Activated CD4-positive, alpha-beta memory T cell treated with anti-CD3 and anti-CD28 coated beads, Interleukin-2, amount 10 ng/mL, durations not matched to agents 7 days and 5 days (primary cell): ENCODE measurements at regions of chr17 and their contacts with region 1.

Region 1: GRCh38 chr17:35088881-35089585 is 25.5 kb upstream of the RFFL start:
- DNase-seq: peak; percentile 93
- H3K4me3 Mint-ChIP-seq: peak overlapping the region; percentile 89
- H3K27ac Mint-ChIP-seq: peak overlapping the region; percentile 90
- H3K4me1 Mint-ChIP-seq: peaks cover 54% of the 10 kb centered on the region
- H3K27me3 Mint-ChIP-seq: no peaks in the 10 kb centered on the region

Region 2: GRCh38 chr17:34998205-34998604 is 90.8 kb before region 1 on chr17:
- CTCF ChIA-PET with region 1: interaction called, 41 read pairs
- POLR2A ChIA-PET with region 1: interaction called, 10 read pairs
- DNase-seq: peak; percentile 87
- H3K4me3 Mint-ChIP-seq: no peak overlapping the region
- H3K27ac Mint-ChIP-seq: peak overlapping the region; percentile 65
- H3K4me1 Mint-ChIP-seq: peaks cover 9% of the 10 kb centered on the region
- H3K27me3 Mint-ChIP-seq: no peaks in the 10 kb centered on the region

Region 3: GRCh38 chr17:35046740-35047283 is 42.2 kb before region 1 on chr17:
- CTCF ChIA-PET with region 1: interaction called, 10 read pairs
- POLR2A ChIA-PET with region 1: interaction called, 40 read pairs
- DNase-seq: peak; percentile 77
- H3K4me3 Mint-ChIP-seq: peak overlapping the region; percentile 70
- H3K27ac Mint-ChIP-seq: peak overlapping the region; percentile 93
- H3K4me1 Mint-ChIP-seq: peaks cover 55% of the 10 kb centered on the region
- H3K27me3 Mint-ChIP-seq: no peaks in the 10 kb centered on the region

Region 4: GRCh38 chr17:35073991-35074627 is 14.9 kb before region 1 on chr17:
- CTCF ChIA-PET with region 1: interaction called, 18 read pairs
- POLR2A ChIA-PET with region 1: interaction called, 164 read pairs
- DNase-seq: no peak
- H3K4me3 Mint-ChIP-seq: peak overlapping the region; percentile 24
- H3K27ac Mint-ChIP-seq: peak overlapping the region; percentile 55
- H3K4me1 Mint-ChIP-seq: peaks cover 67% of the 10 kb centered on the region
- H3K27me3 Mint-ChIP-seq: no peaks in the 10 kb centered on the region

Region 5: GRCh38 chr17:35376245-35376644 is 287.2 kb after region 1 on chr17:
- CTCF ChIA-PET with region 1: no interaction called
- POLR2A ChIA-PET with region 1: no interaction called
- DNase-seq: no peak
- H3K4me3 Mint-ChIP-seq: peak overlapping the region; percentile 10
- H3K27ac Mint-ChIP-seq: peak overlapping the region; percentile 55
- H3K4me1 Mint-ChIP-seq: peaks cover 29% of the 10 kb centered on the region
- H3K27me3 Mint-ChIP-seq: no peaks in the 10 kb centered on the region